ENCODE measurements at regions of chr17 and their contacts with region 1.

Region 1: DNA sequence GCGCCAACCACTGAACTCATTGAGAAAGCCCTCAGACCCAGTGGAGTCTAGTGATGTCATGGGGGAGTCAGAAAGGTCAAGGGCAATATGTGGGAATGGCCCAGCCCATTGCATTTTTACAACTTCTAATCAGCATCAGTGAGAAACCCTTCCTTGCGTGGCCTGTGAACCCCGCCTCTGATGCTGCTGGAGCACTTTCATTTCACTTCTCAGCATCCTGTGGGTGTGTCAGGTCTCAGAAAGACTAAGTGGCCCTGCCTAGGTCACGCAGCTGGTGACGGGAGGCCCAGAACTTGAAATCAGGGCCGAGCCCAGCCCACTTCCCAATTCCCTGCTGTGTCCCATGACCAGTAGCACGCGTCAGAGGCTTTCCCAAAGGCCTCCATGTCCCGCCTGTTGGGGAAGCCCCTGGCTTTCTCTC is 6.1 kb downstream of the DNAI2 start:
- DNase-seq: no peak
- H3K4me3 ChIP-seq: no peak overlapping the region
- H3K27ac ChIP-seq: no peak overlapping the region
- H3K4me1 ChIP-seq: no peaks in the 10 kb centered on the region; the same call in 1 of the 2 replicates
- H3K27me3 ChIP-seq: peaks cover 56% of the 10 kb centered on the region
- CTCF ChIP-seq: no peak

Region 2: DNA sequence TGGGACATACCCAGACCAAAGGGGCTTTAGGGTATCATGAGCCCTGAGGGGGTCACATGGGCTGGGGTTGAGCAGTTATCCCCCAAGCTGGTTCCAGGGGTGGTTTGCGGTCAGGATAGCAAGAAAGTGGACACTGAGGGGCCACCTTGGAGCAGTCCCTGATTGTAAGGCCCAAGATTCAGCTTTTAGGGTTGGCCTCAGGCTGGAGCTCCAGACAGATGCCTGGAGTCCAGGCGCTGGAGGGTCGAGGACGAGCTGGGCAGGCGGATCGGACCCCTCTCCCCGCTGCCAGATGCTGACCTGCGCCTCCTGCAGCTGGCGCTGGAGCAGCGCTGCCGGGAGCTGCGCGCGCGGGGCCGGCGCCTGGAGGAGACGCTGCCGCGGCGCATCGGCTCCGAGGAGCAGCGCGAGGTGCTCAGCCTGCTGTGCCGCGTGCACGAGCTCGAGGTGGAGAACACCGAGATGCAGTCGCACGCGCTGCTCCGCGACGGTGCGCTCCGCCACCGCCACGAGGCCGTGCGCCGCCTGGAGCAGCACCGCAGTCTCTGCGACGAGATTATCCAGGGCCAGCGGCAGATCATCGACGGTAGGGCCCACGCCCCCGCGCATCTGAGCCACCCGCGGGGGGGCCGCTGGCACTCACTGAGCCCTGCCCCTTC is 71.6 kb after region 1 on chr17:
- CTCF ChIA-PET with region 1: interaction called, 14 read pairs
- POLR2A ChIA-PET with region 1: no interaction called
- intact Hi-C with region 1: no loop called
- DNase-seq: no peak
- H3K4me3 ChIP-seq: no peak overlapping the region
- H3K27ac ChIP-seq: no peak overlapping the region
- H3K4me1 ChIP-seq: no peaks in the 10 kb centered on the region
- H3K27me3 ChIP-seq: peaks cover 84% of the 10 kb centered on the region
- CTCF ChIP-seq: no peak